Posterior vena cava (tissue), 2 donors: ENCODE measurements at regions of chr16 and their contacts with region 1.

Region 1: DNA sequence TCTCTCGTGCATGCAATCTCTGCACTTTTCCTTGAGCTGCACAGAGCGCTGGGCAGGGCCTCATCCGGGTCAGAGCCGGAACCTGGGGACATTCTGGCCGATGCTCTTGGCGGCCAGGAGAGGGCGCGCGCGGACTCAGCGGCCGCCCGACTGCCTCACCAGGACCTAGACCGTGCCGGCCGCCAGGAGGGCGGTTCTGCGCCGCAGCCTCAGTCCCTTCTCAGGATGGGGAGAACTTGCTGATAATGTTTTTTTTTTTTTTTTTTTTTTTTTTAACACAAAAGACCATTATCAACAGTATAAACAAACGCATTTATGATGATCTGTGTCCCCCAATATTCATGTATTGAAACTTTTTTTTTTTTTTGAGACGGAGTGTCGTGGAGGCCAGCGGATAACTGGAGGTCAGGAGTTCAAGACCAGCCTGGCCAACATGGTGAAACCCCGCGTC is 8.1 kb upstream of the FLYWCH2 start:
- DNase-seq: peak; percentile 95

Region 2: GRCh38 chr16:2919511-2920255 is 44.7 kb after region 1 on chr16:
- intact Hi-C with region 1: loop called (anchors 5 to 10 kb)
- DNase-seq: no peak

Region 3: DNA sequence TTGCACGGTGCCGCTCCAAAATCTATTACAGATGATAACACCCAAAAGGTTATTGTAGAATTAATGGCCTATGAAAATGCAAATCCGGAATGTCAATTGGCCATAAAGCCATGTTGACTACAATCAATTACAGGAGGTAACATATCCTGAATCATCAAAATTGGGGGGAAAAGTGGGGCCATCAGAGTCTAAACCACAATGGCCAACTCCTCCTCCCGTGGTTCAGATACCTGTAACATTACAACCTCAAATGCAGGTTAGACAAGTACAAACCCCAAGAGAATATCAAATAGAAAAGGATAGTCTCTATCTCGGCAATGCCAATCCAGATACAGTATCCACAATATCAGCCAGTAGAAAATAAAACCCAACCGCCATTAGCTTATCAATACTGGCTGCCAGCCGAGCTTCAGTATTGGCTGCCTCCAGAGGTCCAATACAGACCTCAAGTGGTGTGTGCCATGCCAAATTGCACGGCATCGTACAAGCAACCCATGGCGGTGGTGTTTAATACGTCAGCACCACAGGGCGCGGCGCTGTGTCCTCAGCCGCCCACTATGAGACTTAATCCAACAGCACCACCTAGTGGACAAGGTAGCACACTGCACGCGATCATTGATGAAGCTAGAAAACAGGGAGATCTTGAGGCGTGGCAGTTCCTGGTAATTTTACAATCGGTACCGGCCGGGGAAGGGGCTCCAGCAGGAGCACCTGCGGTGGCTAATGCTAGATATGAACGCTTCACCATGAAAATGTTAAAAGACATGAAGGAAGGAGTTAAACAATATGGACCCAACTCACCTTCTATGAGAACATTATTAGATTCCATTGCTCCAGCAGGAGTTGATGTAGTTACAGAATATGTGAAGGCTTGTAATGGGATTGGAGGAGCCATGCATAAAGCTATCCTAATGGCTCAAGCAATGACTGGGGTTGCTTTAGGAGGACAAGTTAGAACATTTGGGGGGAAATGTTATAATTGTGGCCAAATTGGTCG is 52.0 kb after region 1 on chr16:
- intact Hi-C with region 1: loop called (anchors 5 to 10 kb)
- DNase-seq: peak; percentile 95